CD8-positive, alpha-beta T cell (primary cell): ENCODE measurements at regions of chr1 and their contacts with region 1.

Region 1: DNA sequence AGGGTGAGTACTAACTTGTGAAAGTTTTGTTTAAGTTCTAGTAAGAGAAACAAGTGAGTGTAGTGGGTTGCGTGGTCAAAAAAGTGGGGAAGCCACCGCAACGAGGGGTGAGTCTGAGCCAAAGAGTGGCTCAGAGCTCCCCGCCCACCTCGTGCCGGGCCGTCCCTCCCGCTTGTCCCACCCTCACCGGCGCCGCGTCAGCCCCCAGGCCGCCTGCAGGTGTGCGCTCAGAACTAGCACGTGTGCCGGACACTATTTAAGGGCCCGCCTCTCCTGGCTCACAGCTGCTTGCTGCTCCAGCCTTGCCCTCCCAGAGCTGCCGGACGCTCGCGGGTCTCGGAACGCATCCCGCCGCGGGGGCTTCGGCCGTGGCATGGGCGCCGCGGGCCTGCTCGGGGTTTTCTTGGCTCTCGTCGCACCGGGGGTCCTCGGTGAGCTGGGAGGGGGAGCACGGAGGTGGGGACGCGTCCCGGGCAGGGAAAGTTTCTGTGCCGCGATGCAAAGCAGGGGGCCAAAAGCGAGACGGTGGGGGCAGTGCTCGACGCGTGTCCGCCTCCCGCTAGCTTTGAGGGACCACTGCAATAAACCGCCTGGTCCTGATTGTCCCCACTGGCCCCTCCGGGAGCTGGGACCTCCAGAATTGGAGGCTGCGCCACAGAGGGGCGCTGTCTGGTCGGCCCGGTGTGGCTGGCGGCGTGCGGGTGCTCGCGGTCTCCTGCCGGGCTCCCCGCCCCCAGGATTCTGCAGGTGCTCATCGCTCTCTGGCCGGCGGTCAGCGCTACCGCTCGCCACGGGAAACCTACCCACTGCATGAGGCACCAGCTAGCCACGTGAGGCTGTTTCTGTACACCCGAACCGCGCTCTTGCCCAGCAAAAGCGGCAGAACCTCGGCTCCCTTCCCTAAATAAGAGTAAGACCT is at the start of gene CR2:
- DNase-seq: peak in 8 of 9 experiments; percentile 1 to 73 (median 58)
- ATAC-seq: peak; percentile 72
- H3K4me3 ChIP-seq: peak within 1 kb of the TSS; percentile 49 to 59
- H3K4me3 Mint-ChIP-seq: peak within 1 kb of the TSS; percentile 77
- H3K27ac ChIP-seq: peak within 1 kb of the TSS in 1 of 2 experiments; percentile 7
- H3K27ac Mint-ChIP-seq: peak within 1 kb of the TSS; percentile 64
- H3K4me1 ChIP-seq: peaks cover 38% of the 10 kb centered on the region
- H3K4me1 Mint-ChIP-seq: peaks cover 14% of the 10 kb centered on the region
- H3K27me3 ChIP-seq: peaks cover 0 to 5% of the 10 kb centered on the region in 2 experiments
- H3K27me3 Mint-ChIP-seq: peaks cover 13% of the 10 kb centered on the region
- CTCF ChIP-seq: peak; percentile 60
- total RNA-seq, gene CR2: 5.2 to 5.7 TPM

Region 2: GRCh38 chr1:207404849-207405525 is 49.3 kb before region 1 on chr1:
- CTCF ChIA-PET with region 1: interaction called, 23 read pairs
- POLR2A ChIA-PET with region 1: no interaction called
- intact Hi-C with region 1: loop called in 1 of 2 experiments (anchors 5 kb)
- DNase-seq: peak in 2 of 9 experiments; percentile 68 to 79
- ATAC-seq: peak; percentile 71
- H3K4me3 ChIP-seq: no peak overlapping the region
- H3K4me3 Mint-ChIP-seq: no peak overlapping the region
- H3K27ac ChIP-seq: no peak overlapping the region
- H3K27ac Mint-ChIP-seq: no peak overlapping the region
- H3K4me1 ChIP-seq: no peaks in the 10 kb centered on the region
- H3K4me1 Mint-ChIP-seq: peaks cover 3% of the 10 kb centered on the region
- H3K27me3 ChIP-seq: no peaks in the 10 kb centered on the region
- H3K27me3 Mint-ChIP-seq: peaks cover 5% of the 10 kb centered on the region
- CTCF ChIP-seq: peak; percentile 91

Region 3: GRCh38 chr1:207414606-207415108 is 39.6 kb before region 1 on chr1:
- CTCF ChIA-PET with region 1: no interaction called
- POLR2A ChIA-PET with region 1: no interaction called
- intact Hi-C with region 1: loop called in 1 of 2 experiments (anchors 5 kb)
- DNase-seq: peak in 2 of 9 experiments; percentile 31 to 32
- ATAC-seq: no peak
- H3K4me3 ChIP-seq: no peak overlapping the region
- H3K4me3 Mint-ChIP-seq: no peak overlapping the region
- H3K27ac ChIP-seq: no peak overlapping the region
- H3K27ac Mint-ChIP-seq: peak overlapping the region; percentile 70
- H3K4me1 ChIP-seq: no peaks in the 10 kb centered on the region
- H3K4me1 Mint-ChIP-seq: peaks cover 13% of the 10 kb centered on the region
- H3K27me3 ChIP-seq: no peaks in the 10 kb centered on the region
- H3K27me3 Mint-ChIP-seq: no peaks in the 10 kb centered on the region
- CTCF ChIP-seq: no peak

Region 4: DNA sequence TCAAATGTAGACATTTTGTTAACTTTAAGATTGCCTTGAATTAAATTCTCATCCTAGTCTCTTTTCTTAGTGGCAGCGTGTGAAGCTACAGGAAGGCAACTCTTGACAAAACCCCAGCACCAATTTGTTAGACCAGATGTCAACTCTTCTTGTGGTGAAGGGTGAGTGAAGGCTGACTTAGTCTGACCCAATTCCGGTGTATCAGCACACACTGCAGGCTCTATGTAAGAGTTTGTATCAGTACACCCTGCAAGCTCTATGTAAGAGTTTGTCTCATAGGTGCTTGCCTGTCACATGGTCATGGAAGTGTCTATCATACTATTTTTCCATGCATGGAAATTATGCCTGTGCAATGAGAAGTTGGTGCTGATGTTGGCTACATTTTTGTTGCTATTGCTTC is 16.6 kb after region 1 on chr1:
- CTCF ChIA-PET with region 1: interaction called, 12 read pairs
- POLR2A ChIA-PET with region 1: interaction called, 5 read pairs
- intact Hi-C with region 1: loop called in 1 of 2 experiments (anchors 1 kb)
- DNase-seq: peak in 3 of 9 experiments; percentile 53 to 71 (median 58)
- ATAC-seq: peak; percentile 99
- H3K4me3 ChIP-seq: no peak overlapping the region
- H3K4me3 Mint-ChIP-seq: no peak overlapping the region
- H3K27ac ChIP-seq: no peak overlapping the region
- H3K27ac Mint-ChIP-seq: peak overlapping the region; percentile 41
- H3K4me1 ChIP-seq: peaks cover 11% of the 10 kb centered on the region
- H3K4me1 Mint-ChIP-seq: peaks cover 30% of the 10 kb centered on the region
- H3K27me3 ChIP-seq: no peaks in the 10 kb centered on the region
- H3K27me3 Mint-ChIP-seq: no peaks in the 10 kb centered on the region
- CTCF ChIP-seq: no peak